Dorsolateral prefrontal cortex (tissue), 120 donors: ENCODE measurements at regions of chr3 and their contacts with region 1.

Region 1: DNA sequence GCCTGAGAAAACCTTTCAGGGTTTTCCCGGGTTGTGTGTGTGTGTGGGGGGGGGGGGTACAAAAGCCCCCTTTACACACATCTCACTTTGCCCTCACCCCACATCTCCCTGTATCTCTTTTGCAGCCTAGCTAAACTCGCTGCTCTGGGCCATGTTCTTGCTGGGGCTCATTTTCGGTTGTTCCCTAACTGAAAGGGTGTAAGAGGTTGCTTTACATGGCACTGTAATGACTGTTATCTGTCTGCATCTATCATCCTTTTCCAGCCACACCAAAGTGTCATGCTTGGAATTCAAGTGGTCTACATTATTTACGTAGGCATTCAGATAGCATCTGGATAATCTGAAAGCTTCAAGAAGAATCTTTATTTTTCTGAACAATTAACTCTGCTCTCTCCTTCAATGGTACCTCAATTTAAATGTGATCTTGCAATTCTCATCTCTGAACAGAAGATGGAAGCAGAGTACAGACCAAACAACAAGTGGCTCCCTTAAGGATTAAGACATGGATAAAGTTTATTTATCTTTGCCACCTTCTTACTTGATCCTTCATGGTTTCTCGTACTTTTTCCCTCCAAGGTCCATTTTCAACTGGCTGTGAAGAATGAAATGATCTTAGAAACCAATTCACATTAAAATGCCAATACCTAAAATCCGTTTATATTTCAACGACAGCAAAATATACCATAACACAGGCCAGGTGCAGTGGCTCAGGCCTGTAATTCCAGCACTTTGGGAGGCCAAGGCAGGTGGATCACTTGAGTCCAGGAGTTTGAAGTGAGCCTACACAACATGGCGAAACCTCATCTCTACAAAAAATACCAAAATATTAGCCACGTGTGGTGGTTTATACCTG is 34.9 kb downstream of the DCLK3 start:
- DNase-seq: no peak
- H3K4me3 ChIP-seq: no peak overlapping the region
- H3K27ac ChIP-seq: no peak overlapping the region
- H3K27me3 ChIP-seq: no peaks in the 10 kb centered on the region
- CTCF ChIP-seq: peak; percentile 46 to 89 (median 70)

Region 2: DNA sequence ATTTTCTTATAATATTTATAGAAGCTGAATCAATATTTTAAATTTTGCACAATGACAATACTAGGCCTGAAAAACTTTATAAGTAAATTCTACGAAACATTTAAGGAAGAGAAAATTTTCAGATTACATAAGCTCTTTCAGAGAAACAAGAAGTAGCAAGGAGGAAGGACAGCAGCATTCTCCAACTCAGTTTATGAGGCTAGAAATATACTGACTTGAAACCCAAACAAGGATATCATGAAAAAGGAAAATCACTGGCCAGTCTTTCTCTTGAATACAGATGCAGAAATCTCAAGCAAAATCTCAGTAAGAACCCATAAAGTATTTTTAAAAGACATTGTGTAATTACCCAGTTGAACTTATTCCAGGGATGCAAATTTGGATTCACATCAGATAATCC is 227.8 kb before region 1 on chr3:
- intact Hi-C with region 1: no loop called
- DNase-seq: no peak
- H3K4me3 ChIP-seq: no peak overlapping the region
- H3K27ac ChIP-seq: no peak overlapping the region
- H3K27me3 ChIP-seq: no peaks in the 10 kb centered on the region
- CTCF ChIP-seq: no peak

Region 3: DNA sequence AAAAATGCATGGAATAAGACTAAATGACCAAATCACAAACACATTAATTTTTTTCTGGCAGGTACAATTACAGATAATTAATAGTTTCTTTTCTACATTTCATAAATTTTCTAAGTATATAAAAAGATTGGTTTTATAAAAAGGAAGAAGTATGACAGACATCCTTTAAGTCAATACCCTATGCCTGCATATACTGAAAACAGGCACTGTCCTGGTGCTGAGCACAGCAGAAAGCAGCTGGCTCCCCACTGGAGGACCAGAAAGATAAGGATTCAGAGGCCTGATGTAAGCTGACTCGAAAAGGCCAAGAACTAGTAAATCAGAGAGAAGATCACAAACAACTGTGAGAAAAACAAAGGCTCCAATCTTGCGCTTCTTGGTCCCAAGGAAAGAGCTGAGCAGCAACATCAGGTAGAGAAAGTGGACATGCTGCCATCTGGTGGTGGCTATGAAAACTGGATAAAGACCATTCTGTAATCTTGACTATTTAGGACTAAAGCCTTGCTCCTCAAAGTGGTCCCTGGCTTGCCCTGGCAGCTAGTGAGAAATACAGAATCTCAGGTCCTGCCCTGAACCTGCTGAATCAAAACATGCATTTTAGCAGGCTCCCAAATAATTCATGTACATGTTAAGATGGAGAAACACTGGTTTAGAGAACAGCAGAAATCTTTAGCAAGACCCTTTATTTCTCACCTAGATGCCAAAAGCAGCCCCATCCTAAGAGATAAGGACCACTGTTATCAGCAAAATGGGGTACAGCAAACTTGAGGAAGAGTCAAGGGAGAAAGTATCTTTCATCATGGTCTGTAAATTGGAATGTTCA is 139.4 kb after region 1 on chr3:
- intact Hi-C with region 1: loop called (anchors 2 to 5 kb)
- DNase-seq: peak in 5 of 10 donors; percentile 38 to 59 (median 44)
- H3K4me3 ChIP-seq: peak overlapping the region in 1 of 59 donors; percentile 15
- H3K27ac ChIP-seq: no peak overlapping the region
- H3K27me3 ChIP-seq: no peaks in the 10 kb centered on the region
- CTCF ChIP-seq: peak; percentile 54 to 97 (median 84)

Region 4: DNA sequence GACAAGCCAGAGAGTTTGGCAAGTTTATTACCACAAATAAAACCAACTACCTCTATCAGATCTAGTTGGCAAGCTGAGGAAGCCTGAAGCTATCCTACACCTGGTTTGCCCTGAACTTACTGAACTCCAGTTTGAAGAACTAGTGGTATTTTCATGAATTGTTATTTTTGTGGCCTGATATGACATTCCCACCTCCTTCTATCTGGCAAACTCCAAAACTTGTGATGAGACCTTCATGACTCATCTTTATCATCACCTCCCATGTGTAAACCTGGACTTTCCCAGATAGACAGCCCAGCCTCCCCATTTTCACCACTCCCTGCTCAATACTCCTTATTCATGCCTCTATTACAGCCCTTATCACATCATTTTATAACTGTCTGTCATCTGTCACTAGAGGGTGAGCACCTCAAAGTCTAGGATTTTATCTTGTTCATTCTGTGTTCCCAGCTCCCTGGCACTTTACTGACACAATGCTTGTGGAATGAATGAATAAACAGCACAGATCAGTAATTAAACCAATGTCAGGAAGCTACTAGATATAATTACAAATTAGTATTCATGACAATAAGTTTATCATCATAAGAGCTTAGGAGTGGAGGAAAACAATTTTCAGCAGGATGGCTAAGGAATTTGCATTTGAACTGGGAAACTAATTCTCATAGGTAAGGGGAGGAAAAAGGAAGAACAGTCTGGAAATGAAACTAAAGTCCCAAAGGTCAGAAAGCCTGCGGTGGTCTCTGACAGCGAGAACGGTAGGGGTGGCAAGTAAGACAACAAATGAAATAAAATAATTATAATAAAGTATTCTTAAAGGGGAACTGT is 228.6 kb after region 1 on chr3:
- intact Hi-C with region 1: loop called in 1 of 2 experiments (anchors 2 kb)
- DNase-seq: no peak
- H3K4me3 ChIP-seq: no peak overlapping the region
- H3K27ac ChIP-seq: no peak overlapping the region
- H3K27me3 ChIP-seq: no peaks in the 10 kb centered on the region
- CTCF ChIP-seq: no peak